Activated CD8-positive, alpha-beta memory T cell treated with anti-CD3 and anti-CD28 coated beads, Interleukin-2, amount 10 ng/mL, durations not matched to agents 7 days and 5 days (primary cell): ENCODE measurements at regions of chr5 and their contacts with region 1.

Region 1: GRCh38 chr5:38382898-38383297 is 124.5 kb downstream of the EGFLAM start:
- DNase-seq: peak; percentile 61
- ATAC-seq: peak; percentile 78
- H3K4me3 Mint-ChIP-seq: no peak overlapping the region
- H3K27ac Mint-ChIP-seq: no peak overlapping the region
- H3K4me1 Mint-ChIP-seq: no peaks in the 10 kb centered on the region
- H3K27me3 Mint-ChIP-seq: peaks cover 29% of the 10 kb centered on the region

Region 2: GRCh38 chr5:38433160-38433861 is 50.4 kb after region 1 on chr5:
- CTCF ChIA-PET with region 1: no interaction called
- DNase-seq: no peak
- ATAC-seq: no peak
- H3K4me3 Mint-ChIP-seq: no peak overlapping the region
- H3K27ac Mint-ChIP-seq: no peak overlapping the region
- H3K4me1 Mint-ChIP-seq: no peaks in the 10 kb centered on the region
- H3K27me3 Mint-ChIP-seq: peaks cover 36% of the 10 kb centered on the region

Region 3: DNA sequence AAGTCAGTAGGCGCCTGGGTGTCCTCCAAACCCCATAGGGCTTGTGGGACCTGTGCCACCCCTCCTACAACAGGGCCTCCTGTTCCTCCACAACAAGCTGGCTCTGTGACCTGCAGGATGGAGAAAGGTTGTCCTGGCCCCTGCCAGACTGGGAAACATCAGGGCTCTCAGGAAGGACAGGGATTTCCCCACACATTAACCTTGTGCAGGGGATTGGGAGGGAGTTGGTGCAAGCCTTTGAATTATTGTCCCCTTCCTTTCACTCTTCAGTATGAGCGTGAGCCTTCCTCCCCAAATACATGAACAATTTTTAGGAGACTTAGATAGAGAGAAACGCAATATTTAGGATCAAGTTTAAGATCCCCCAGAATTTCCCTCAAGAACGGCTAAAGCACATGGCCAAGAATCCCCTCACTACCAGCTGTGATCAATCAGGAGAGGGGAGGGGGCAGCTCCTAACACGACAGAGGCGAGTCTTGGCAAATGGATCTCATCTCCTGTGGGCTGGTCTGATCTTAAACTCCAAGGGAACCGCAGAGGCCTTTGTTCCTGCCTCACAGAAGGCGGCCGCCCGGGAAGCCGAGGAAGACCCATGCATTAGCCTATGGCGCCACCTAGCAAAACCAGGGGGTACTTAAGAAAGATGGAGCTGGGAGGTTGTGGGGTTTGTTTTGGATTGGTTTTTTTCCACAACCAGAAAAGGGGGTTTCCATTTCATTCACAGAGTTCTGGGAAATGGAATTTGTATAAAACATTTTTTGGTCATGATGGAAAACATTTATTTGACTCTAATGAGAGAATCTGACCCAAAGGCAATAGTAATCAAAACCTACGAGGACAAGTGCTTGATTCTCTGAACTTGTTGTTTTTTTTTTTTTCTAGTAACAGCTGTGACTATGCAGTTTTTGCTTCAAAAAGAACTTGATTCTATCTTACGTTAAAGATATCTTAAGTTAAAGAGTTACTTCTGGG is 426.8 kb after region 1 on chr5:
- CTCF ChIA-PET with region 1: interaction called, 17 read pairs
- DNase-seq: peak; percentile 66
- ATAC-seq: peak; percentile 63
- H3K4me3 Mint-ChIP-seq: no peak overlapping the region
- H3K27ac Mint-ChIP-seq: no peak overlapping the region
- H3K4me1 Mint-ChIP-seq: peaks cover 3% of the 10 kb centered on the region
- H3K27me3 Mint-ChIP-seq: peaks cover 32% of the 10 kb centered on the region